Aorta (tissue), 5 donors: ENCODE measurements at regions of chr1 and their contacts with region 1.

Region 1: GRCh38 chr1:25922056-25922969 is 16.1 kb upstream of the STMN1 start:
- DNase-seq: peak in 1 of 2 donors; percentile 72
- ATAC-seq: peak; percentile 74
- H3K4me3 ChIP-seq: peak overlapping the region; percentile 5 to 29
- H3K27ac ChIP-seq: peak overlapping the region in 1 of 2 donors; percentile 13
- H3K4me1 ChIP-seq: no peaks in the 10 kb centered on the region
- H3K27me3 ChIP-seq: no peaks in the 10 kb centered on the region

Region 2: GRCh38 chr1:25737130-25737529 is 185.2 kb before region 1 on chr1:
- intact Hi-C with region 1: no loop called
- DNase-seq: peak; percentile 56 to 70
- ATAC-seq: peak; percentile 3
- H3K4me3 ChIP-seq: no peak overlapping the region
- H3K27ac ChIP-seq: no peak overlapping the region
- H3K4me1 ChIP-seq: no peaks in the 10 kb centered on the region
- H3K27me3 ChIP-seq: no peaks in the 10 kb centered on the region

Region 3: DNA sequence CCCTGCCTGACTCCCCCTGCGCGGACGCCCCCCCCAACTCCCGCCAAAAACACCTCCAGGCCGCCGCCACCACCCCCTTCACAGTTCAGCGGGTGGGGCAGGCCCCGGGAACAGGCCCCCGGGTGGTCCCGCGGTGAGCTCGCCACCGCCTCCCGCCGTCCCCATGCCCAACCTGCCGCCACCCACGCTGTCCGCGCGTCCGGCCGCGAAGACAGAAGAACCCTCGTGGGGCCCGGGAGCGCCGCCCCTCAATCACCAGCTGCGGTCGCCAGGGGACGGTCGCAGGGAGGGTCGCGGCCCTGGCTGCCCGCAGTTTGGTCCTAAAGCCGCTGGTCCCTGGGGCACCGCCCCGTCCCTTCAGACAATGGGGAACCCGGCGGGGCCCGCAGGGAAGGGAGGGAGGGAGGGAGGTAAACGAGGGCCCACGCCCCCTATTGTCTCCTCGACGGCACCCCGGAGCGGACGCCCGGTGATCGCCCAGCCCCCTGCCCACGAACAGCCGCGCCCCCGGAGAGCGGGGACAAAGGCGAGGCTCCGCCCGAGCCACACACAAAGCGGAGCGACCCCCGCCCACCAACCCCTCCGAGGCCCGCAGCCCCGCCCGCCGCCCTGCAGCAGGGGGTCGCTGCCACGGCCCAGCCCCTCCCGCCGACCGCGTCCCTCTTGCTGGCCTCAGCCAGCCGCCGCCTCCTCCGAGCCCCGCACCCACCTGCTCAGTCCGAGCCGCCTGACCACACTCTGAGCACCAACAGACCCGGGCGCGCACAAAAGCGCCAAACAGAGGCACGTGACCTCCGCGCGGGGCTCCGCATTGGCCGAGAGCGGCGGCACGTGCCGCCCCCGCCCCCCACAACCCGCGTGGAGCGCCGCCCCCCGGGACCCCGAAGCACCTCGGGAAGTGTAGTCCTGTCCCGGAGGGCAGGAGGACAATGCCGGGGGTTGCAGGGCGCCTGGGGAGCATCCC is 16.4 kb before region 1 on chr1 and contains the start of gene STMN1:
- intact Hi-C with region 1: loop called in 1 of 2 experiments (anchors 2 kb)
- DNase-seq: peak; percentile 93 to 96
- ATAC-seq: peak; percentile 94
- H3K4me3 ChIP-seq: peak within 1 kb of the TSS; percentile 82 to 86
- H3K27ac ChIP-seq: peak within 1 kb of the TSS in 1 of 2 donors; percentile 25
- H3K4me1 ChIP-seq: no peaks in the 10 kb centered on the region
- H3K27me3 ChIP-seq: no peaks in the 10 kb centered on the region
- total RNA-seq, gene STMN1: 34.5 to 37.6 TPM

Region 4: GRCh38 chr1:25971066-25971810 is 48.9 kb after region 1 on chr1:
- intact Hi-C with region 1: no loop called
- DNase-seq: no peak
- ATAC-seq: no peak
- H3K4me3 ChIP-seq: no peak overlapping the region
- H3K27ac ChIP-seq: no peak overlapping the region
- H3K4me1 ChIP-seq: no peaks in the 10 kb centered on the region
- H3K27me3 ChIP-seq: no peaks in the 10 kb centered on the region

Region 5: DNA sequence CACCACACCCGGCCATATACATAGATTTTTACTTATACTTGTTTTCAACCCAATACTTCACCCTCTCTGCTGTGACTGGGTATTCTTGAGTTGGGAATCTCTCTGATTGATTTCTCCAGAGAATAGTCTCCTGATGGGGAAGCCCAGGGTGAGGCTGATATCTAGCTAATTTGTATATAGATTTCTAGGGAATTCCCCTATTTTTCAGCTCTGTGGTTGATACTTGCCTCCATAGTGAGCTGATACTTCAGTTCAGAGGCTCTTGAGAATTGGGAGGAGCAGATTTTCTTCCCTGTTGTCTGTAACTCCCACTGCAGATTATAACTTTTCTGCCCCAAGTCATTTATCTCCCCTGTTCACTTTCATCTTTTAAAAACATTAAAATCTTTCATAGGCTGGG is 343.1 kb after region 1 on chr1:
- intact Hi-C with region 1: no loop called
- DNase-seq: no peak
- ATAC-seq: no peak
- H3K4me3 ChIP-seq: no peak overlapping the region
- H3K27ac ChIP-seq: no peak overlapping the region
- H3K4me1 ChIP-seq: no peaks in the 10 kb centered on the region
- H3K27me3 ChIP-seq: no peaks in the 10 kb centered on the region